Endothelial cell of umbilical vein (primary cell): ENCODE measurements at regions of chr18 and their contacts with region 1.

Region 1: DNA sequence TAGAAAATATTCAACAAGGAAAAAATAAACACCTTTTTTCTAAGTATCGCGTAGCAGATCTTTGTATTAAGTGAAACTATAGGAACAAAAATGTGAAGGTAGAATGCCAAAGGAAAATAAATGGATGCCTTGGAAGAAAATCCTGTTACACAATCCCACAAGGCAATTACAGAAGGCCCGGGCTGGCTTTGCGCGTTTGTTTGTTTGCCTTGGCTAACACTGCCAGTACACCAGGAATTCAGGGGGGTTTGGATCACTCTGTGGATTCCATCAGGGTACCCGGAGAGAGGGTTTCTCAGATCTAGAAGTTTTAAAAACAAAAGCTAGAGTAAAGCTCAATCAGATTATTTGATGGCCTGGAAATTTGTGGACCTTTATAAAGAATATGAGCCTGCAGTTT is 478.3 kb downstream of the FBXO15 start:
- DNase-seq: no peak
- H3K4me3 ChIP-seq: no peak overlapping the region
- H3K27ac ChIP-seq: no peak overlapping the region
- H3K4me1 ChIP-seq: no peaks in the 10 kb centered on the region
- H3K27me3 ChIP-seq: no peaks in the 10 kb centered on the region
- CTCF ChIP-seq: no peak
- POLR2A ChIP-seq: no peak

Region 2: DNA sequence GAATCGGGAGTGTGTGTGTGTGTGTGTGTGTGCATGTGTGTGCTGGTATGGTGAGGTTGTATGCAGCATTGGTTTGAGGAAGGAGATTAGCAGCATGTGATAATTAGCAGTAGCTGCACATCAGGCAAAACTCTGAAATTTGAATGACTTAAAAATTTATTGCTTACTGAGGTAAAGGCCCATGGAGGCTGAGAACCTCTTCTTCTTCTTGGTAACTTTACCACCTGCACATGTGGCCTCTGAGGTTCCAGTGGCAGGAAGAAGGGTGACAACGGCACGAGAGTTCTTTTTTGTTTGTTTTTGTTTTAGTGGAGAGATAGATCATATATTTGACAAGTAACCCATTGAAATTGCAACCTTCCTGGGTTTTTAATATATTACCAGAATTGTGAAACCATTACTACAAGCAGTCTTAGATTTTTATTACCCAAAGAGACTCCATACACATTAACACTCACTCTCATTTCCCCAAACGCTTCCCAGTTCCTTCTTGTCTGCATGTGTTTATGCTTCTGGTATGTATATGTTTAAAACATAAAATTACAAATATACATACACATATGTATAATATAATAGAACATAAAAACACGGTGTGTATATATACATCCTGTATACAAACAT is 1247.6 kb after region 1 on chr18:
- CTCF ChIA-PET with region 1: no interaction called
- POLR2A ChIA-PET with region 1: no interaction called
- dilution Hi-C with region 1: no loop called
- intact Hi-C with region 1: loop called (anchors 10 kb)
- DNase-seq: no peak
- H3K4me3 ChIP-seq: no peak overlapping the region
- H3K27ac ChIP-seq: no peak overlapping the region
- H3K4me1 ChIP-seq: no peaks in the 10 kb centered on the region
- H3K27me3 ChIP-seq: no peaks in the 10 kb centered on the region
- CTCF ChIP-seq: no peak
- POLR2A ChIP-seq: no peak